ENCODE measurements at regions of chr15 and their contacts with region 1.

Region 1: GRCh38 chr15:42184296-42184695 is 23.8 kb downstream of the VPS39 start:
- DNase-seq: peak in 3 of 14 experiments; percentile 7 to 26 (median 24)
- ATAC-seq: no peak
- H3K4me3 ChIP-seq: no peak overlapping the region
- H3K4me3 Mint-ChIP-seq: no peak overlapping the region
- H3K27ac ChIP-seq: no peak overlapping the region
- H3K27ac Mint-ChIP-seq: no peak overlapping the region
- H3K4me1 ChIP-seq: no peaks in the 10 kb centered on the region
- H3K4me1 Mint-ChIP-seq: no peaks in the 10 kb centered on the region
- H3K27me3 ChIP-seq: no peaks in the 10 kb centered on the region
- H3K27me3 Mint-ChIP-seq: no peaks in the 10 kb centered on the region
- CTCF ChIP-seq: no peak

Region 2: GRCh38 chr15:42239528-42240182 is 55.4 kb after region 1 on chr15:
- CTCF ChIA-PET with region 1: no interaction called
- POLR2A ChIA-PET with region 1: no interaction called
- intact Hi-C with region 1: loop called in 1 of 2 experiments (anchors 5 kb)
- DNase-seq: no peak
- ATAC-seq: no peak
- H3K4me3 ChIP-seq: no peak overlapping the region
- H3K4me3 Mint-ChIP-seq: no peak overlapping the region
- H3K27ac ChIP-seq: no peak overlapping the region
- H3K27ac Mint-ChIP-seq: no peak overlapping the region
- H3K4me1 ChIP-seq: no peaks in the 10 kb centered on the region
- H3K4me1 Mint-ChIP-seq: peaks cover 4% of the 10 kb centered on the region
- H3K27me3 ChIP-seq: no peaks in the 10 kb centered on the region
- H3K27me3 Mint-ChIP-seq: no peaks in the 10 kb centered on the region
- CTCF ChIP-seq: no peak

Region 3: GRCh38 chr15:42371125-42371524 is 186.8 kb after region 1 on chr15:
- CTCF ChIA-PET with region 1: no interaction called
- POLR2A ChIA-PET with region 1: no interaction called
- intact Hi-C with region 1: no loop called
- DNase-seq: no peak
- ATAC-seq: no peak
- H3K4me3 ChIP-seq: no peak overlapping the region
- H3K4me3 Mint-ChIP-seq: no peak overlapping the region
- H3K27ac ChIP-seq: no peak overlapping the region
- H3K27ac Mint-ChIP-seq: no peak overlapping the region
- H3K4me1 ChIP-seq: no peaks in the 10 kb centered on the region
- H3K4me1 Mint-ChIP-seq: no peaks in the 10 kb centered on the region
- H3K27me3 ChIP-seq: no peaks in the 10 kb centered on the region
- H3K27me3 Mint-ChIP-seq: no peaks in the 10 kb centered on the region
- CTCF ChIP-seq: no peak

Measured in CD4-positive, alpha-beta T cell (primary cell).